ENCODE measurements at regions of chr21 and their contacts with region 1.

Region 1: DNA sequence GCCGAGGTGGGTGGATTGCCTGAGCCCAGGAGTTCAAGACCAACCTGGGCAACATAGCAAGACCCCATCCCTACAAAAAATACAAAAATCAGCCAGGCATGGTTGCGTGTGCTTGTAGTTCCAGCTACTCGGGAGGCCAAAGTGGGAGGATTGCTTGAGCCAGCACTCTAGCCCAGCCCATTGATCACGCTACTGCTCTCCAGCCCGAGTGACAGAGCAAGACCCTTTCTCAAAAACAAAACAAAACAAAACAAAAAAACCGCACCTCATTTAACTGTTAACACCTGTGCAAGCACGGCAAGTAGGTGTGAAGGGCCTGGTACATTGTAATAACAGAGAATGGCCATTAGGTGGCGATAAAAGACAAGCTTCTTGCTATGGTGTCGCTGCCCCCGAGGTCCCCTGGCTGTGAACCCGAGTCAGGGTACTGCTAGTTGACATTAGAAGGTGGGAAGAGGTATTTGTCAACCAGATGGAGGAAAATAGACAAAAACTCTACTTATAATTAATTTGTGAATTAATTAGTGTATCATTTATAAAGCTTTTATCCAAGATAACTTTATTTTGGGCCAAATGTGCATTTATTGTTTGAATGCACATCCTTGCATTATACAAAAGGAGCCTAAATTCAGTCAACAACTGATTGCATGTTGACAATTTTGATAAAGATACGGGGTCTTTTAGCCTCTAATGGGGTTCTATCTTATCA is 66.5 kb downstream of the SH3BGR start:
- DNase-seq: peak; percentile 78
- ATAC-seq: peak; percentile 96
- H3K4me3 Mint-ChIP-seq: no peak overlapping the region
- H3K27ac Mint-ChIP-seq: no peak overlapping the region
- H3K4me1 Mint-ChIP-seq: peaks cover 40% of the 10 kb centered on the region
- H3K27me3 Mint-ChIP-seq: no peaks in the 10 kb centered on the region; the same call in 1 of the 2 replicates
- CTCF ChIP-seq: peak; percentile 89

Region 2: GRCh38 chr21:39712972-39713371 is 194.7 kb after region 1 on chr21:
- CTCF ChIA-PET with region 1: interaction called, 12 read pairs
- POLR2A ChIA-PET with region 1: no interaction called
- DNase-seq: peak; percentile 38
- ATAC-seq: peak; percentile 69
- H3K4me3 Mint-ChIP-seq: no peak overlapping the region
- H3K27ac Mint-ChIP-seq: peak overlapping the region; percentile 76; the same call in 1 of the 2 replicates
- H3K4me1 Mint-ChIP-seq: peaks cover 31% of the 10 kb centered on the region
- H3K27me3 Mint-ChIP-seq: no peaks in the 10 kb centered on the region; the same call in 1 of the 2 replicates
- CTCF ChIP-seq: no peak

Measured in WTC11 (cell line).